ENCODE measurements at regions of chr6 and their contacts with region 1.

Region 1: DNA sequence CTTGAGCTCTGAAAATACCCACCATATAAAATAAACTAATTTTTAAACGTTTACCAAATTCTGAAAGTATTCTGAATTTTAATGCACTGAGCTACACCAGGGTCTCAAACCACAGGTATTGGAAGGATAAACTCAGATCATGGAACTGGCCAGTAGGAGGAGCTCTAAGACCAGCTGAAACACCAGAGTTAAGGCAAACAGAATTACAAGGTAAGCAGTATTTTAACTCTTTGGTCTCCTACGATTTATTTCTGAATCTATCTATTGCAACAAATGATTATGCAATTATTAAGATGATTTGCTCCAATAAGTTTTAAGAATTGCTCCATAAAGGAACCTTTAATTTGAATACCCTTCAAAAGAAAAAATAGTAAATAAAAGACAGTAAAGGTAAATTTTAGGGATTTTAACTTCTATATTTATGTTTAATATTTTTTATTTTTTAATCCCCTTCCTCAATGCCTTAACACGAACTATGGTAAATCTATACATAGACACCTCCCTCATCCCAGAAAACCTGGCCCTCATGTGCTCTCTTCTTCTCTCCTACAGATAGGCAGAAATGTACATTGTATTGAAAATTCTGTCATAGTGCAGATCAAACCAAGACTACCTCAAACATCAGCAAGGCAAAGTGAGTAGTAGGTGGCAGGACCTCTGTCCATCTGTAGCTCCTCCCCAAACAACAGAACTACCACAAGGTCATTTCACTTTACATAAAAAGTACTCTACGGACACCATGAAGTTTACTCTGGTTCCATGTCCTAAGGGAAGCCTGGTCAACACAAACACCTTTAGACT is 58.4 kb downstream of the SMLR1 start:
- DNase-seq: peak; percentile 81
- ATAC-seq: peak; percentile 89
- H3K4me3 ChIP-seq: no peak overlapping the region
- H3K27ac ChIP-seq: no peak overlapping the region; the same call in 1 of the 2 replicates
- H3K4me1 ChIP-seq: peaks cover 5% of the 10 kb centered on the region
- H3K27me3 ChIP-seq: no peaks in the 10 kb centered on the region
- CTCF ChIP-seq: peak; percentile 91
- POLR2A ChIP-seq: peak; percentile 61
- RAD21 ChIP-seq: peak; percentile 96

Region 2: GRCh38 chr6:131063028-131063763 is 177.6 kb after region 1 on chr6 and contains the start of gene EPB41L2:
- CTCF ChIA-PET with region 1: no interaction called
- POLR2A ChIA-PET with region 1: no interaction called
- dilution Hi-C with region 1: no loop called
- in situ Hi-C with region 1: no loop called
- intact Hi-C with region 1: loop called (anchors 1 kb)
- DNase-seq: peak; percentile 86
- ATAC-seq: peak; percentile 93
- H3K4me3 ChIP-seq: peak within 1 kb of the TSS; percentile 65
- H3K27ac ChIP-seq: peak within 1 kb of the TSS; percentile 87
- H3K4me1 ChIP-seq: 0 out of 2 replicates have a peak, but pooled peaks cover 3% of the 10 kb centered on the region
- H3K27me3 ChIP-seq: no peaks in the 10 kb centered on the region
- CTCF ChIP-seq: peak; percentile 20; the same call in 1 of the 2 replicates
- POLR2A ChIP-seq: peak; percentile 84
- RAD21 ChIP-seq: peak; percentile 17
- total RNA-seq, gene EPB41L2: 85.7 and 89.2 TPM in 2 replicates

Region 3: GRCh38 chr6:131167773-131168172 is 282.2 kb after region 1 on chr6:
- CTCF ChIA-PET with region 1: interaction called, 3 read pairs
- POLR2A ChIA-PET with region 1: no interaction called
- dilution Hi-C with region 1: no loop called
- in situ Hi-C with region 1: loop called (anchors 10 kb)
- intact Hi-C with region 1: loop called (anchors 2 kb)
- DNase-seq: peak; percentile 17
- ATAC-seq: peak; percentile 47; the same call in 1 of the 2 replicates
- H3K4me3 ChIP-seq: no peak overlapping the region
- H3K27ac ChIP-seq: no peak overlapping the region
- H3K4me1 ChIP-seq: 0 out of 2 replicates have a peak, but pooled peaks cover 2% of the 10 kb centered on the region
- H3K27me3 ChIP-seq: no peaks in the 10 kb centered on the region
- CTCF ChIP-seq: peak; percentile 38
- POLR2A ChIP-seq: no peak
- RAD21 ChIP-seq: peak; percentile 42

Region 4: DNA sequence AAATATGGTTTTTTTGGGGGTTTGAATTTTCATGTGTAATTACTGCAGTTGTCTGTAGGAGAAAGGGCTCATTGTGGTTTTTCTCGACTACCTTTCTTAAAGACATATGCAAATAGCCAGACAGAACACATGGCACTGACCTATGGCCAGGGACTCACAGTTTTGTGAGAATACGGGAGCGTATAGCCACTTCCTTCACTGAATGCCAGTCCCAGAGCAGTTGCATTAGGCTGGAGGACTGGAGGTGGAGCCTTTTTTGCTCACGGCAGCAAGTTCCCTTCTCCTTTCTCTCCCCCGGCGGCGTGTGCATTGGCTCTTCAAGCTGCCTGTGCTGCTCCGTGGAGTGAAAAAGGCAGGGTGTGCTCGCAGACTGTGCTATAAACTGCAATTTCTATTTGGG is 364.5 kb after region 1 on chr6:
- CTCF ChIA-PET with region 1: no interaction called
- POLR2A ChIA-PET with region 1: no interaction called
- dilution Hi-C with region 1: no loop called
- in situ Hi-C with region 1: no loop called
- intact Hi-C with region 1: loop called (anchors 10 kb)
- DNase-seq: peak; percentile 48
- ATAC-seq: peak; percentile 96
- H3K4me3 ChIP-seq: peak overlapping the region; percentile 36
- H3K27ac ChIP-seq: no peak overlapping the region
- H3K4me1 ChIP-seq: no peaks in the 10 kb centered on the region
- H3K27me3 ChIP-seq: no peaks in the 10 kb centered on the region
- CTCF ChIP-seq: no peak
- POLR2A ChIP-seq: no peak
- RAD21 ChIP-seq: no peak

Region 5: DNA sequence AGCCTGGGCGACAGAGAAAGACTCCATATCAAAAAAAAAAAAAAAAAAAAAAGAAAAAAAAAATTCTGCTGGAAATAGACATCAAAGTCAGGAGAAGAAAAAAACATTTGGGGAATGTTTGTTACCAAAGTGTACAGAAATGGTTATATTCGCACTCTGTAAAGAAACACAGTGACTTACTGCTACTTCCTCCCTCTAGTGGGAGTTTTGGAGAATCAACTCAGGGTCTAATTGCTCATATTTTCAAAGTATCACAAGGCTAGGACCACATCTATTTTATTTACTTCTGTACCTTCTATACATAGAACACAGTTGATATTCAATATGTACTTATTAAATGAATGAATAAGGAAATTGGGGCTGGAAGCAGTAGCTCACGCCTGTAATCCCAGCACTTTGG is 711.9 kb after region 1 on chr6:
- CTCF ChIA-PET with region 1: no interaction called
- POLR2A ChIA-PET with region 1: no interaction called
- dilution Hi-C with region 1: no loop called
- in situ Hi-C with region 1: no loop called
- intact Hi-C with region 1: loop called (anchors 10 kb)
- DNase-seq: no peak
- ATAC-seq: peak; percentile 35; the same call in 1 of the 2 replicates
- H3K4me3 ChIP-seq: no peak overlapping the region
- H3K27ac ChIP-seq: no peak overlapping the region
- H3K4me1 ChIP-seq: peaks cover 2% of the 10 kb centered on the region; the same call in 1 of the 2 replicates
- H3K27me3 ChIP-seq: no peaks in the 10 kb centered on the region
- CTCF ChIP-seq: no peak
- POLR2A ChIP-seq: no peak
- RAD21 ChIP-seq: no peak

Measured in IMR-90 (cell line).